Activated B cell treated with CpG ODN at 0.5 μM for 24 hours (primary cell): ENCODE measurements at regions of chr11 and their contacts with region 1.

Region 1: GRCh38 chr11:61138940-61139339 is 22.3 kb downstream of the VPS37C start:
- DNase-seq: no peak
- ATAC-seq: no peak
- H3K4me3 Mint-ChIP-seq: no peak overlapping the region
- H3K27ac Mint-ChIP-seq: no peak overlapping the region
- H3K4me1 Mint-ChIP-seq: peaks cover 36% of the 10 kb centered on the region
- H3K27me3 Mint-ChIP-seq: no peaks in the 10 kb centered on the region
- CTCF ChIP-seq: no peak

Region 2: GRCh38 chr11:60734279-60734678 is 404.7 kb before region 1 on chr11:
- CTCF ChIA-PET with region 1: no interaction called
- POLR2A ChIA-PET with region 1: interaction called, 14 read pairs
- intact Hi-C with region 1: no loop called
- DNase-seq: no peak
- ATAC-seq: no peak
- H3K4me3 Mint-ChIP-seq: no peak overlapping the region
- H3K27ac Mint-ChIP-seq: no peak overlapping the region
- H3K4me1 Mint-ChIP-seq: no peaks in the 10 kb centered on the region
- H3K27me3 Mint-ChIP-seq: peaks cover 28% of the 10 kb centered on the region
- CTCF ChIP-seq: no peak

Region 3: GRCh38 chr11:60985991-60986915 is 152.7 kb before region 1 on chr11:
- CTCF ChIA-PET with region 1: no interaction called
- POLR2A ChIA-PET with region 1: no interaction called
- intact Hi-C with region 1: no loop called
- DNase-seq: no peak
- ATAC-seq: peak; percentile 47
- H3K4me3 Mint-ChIP-seq: peak overlapping the region; percentile 24
- H3K27ac Mint-ChIP-seq: peak overlapping the region; percentile 79
- H3K4me1 Mint-ChIP-seq: peaks cover 53% of the 10 kb centered on the region
- H3K27me3 Mint-ChIP-seq: no peaks in the 10 kb centered on the region
- CTCF ChIP-seq: no peak